ENCODE measurements at regions of chr2 and their contacts with region 1.

Region 1: DNA sequence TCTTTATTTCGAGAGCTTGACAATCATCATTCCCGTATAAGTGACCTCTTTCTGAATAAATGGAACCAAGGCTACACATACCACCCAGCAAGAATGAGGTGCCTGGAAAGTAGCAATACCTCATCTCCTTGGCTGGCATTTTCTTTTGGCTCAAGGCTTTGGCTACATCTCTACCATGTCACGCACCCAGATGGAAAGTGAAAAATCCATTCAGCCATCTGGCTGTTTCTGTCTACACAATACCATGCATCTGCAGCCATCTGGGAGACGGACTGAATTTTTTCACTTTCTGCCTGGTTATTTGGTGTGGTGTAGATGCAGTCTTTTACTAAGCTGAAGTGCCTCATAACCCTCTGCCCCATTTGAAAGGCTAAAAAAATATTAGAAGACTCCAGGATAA is 566.9 kb downstream of the BCL11A start:
- DNase-seq: no peak
- ATAC-seq: no peak
- H3K4me3 ChIP-seq: no peak overlapping the region
- H3K27ac ChIP-seq: no peak overlapping the region
- H3K4me1 ChIP-seq: peaks cover 5% of the 10 kb centered on the region
- H3K27me3 ChIP-seq: no peaks in the 10 kb centered on the region
- CTCF ChIP-seq: no peak

Region 2: DNA sequence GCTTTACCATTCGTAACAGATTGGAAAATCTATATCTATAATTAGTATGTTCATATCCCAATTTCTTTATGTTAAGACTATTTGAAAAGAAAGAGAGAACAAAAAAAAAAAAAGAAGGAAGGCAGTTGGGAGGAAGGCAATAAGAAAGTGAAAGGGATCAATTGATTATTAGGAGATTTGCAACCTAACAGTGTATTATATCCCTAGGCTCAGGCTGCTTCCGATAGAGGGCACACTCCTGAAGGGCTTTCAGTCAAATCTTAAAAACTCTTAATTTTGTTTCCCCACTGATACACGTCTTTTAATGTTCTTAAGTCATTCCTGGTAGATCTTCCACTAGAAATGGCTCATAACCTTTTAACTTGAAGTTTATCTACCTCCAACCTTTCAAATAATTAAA is 197.0 kb before region 1 on chr2:
- intact Hi-C with region 1: loop called in 1 of 2 experiments (anchors 5 kb)
- DNase-seq: no peak
- ATAC-seq: no peak
- H3K4me3 ChIP-seq: no peak overlapping the region
- H3K27ac ChIP-seq: no peak overlapping the region
- H3K4me1 ChIP-seq: no peaks in the 10 kb centered on the region
- H3K27me3 ChIP-seq: peaks cover 0 to 2% (median 0%) of the 10 kb centered on the region in 3 donors
- CTCF ChIP-seq: no peak

Region 3: DNA sequence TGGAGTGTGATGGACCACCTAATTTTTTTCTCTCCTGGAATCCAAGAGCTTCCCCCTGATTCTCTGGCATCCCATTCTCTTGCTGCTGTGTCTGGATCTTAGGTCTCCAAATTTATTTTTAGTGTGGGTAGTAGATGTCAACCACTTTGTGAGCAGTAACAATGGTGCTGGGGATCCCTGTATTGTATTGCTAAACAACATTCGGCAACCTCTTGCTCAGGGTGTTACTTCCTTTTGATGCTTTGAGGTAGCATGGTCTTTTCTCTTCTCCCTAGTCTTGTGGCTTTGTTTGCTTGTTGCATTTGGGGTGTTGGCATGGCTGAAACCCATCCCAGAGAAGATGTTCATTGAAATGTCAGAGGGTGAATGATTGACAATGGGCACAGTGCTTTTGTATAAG is 170.4 kb before region 1 on chr2:
- intact Hi-C with region 1: no loop called
- DNase-seq: no peak
- ATAC-seq: no peak
- H3K4me3 ChIP-seq: no peak overlapping the region
- H3K27ac ChIP-seq: no peak overlapping the region
- H3K4me1 ChIP-seq: no peaks in the 10 kb centered on the region
- H3K27me3 ChIP-seq: no peaks in the 10 kb centered on the region
- CTCF ChIP-seq: no peak

Region 4: DNA sequence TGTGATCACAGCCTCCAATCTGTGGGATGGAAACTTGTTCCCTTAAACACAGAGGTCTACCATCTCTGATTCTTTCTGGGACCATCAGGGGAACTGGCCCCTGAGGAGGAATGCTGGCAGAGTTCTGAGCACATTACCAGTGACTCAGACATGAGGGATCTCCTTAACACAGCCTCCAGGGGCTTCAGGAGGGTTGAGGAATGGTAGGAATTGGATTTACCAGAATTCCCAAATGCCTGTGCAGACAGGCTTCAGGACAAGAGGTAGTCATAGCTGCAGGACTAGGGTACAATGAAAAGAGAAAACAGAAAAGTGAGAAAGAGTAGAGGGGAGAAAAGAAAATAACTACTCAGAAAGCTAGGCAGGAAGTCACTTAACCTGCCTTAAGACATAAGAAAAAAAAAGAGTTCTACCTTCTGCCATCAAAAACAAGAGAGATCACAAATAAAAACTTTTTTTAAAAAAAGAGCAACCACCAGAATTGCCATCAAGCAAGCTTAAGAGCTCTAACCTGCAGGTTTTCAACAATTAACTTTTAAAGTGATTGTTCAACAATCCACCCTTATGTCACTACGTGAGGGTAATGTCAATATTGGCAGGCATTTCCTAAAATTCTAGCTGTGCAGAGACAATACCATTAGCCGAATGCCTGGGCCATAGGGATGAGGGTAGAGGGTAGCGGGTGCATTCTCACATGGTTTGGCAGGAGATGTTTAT is 42.5 kb after region 1 on chr2:
- intact Hi-C with region 1: no loop called
- DNase-seq: no peak
- ATAC-seq: no peak
- H3K4me3 ChIP-seq: no peak overlapping the region
- H3K27ac ChIP-seq: no peak overlapping the region
- H3K4me1 ChIP-seq: no peaks in the 10 kb centered on the region
- H3K27me3 ChIP-seq: peaks cover 0 to 10% (median 2%) of the 10 kb centered on the region in 3 donors
- CTCF ChIP-seq: no peak

Measured in psoas muscle (tissue), 8 donors.